ACHN (cell line): ENCODE measurements at regions of chr1 and their contacts with region 1.

Region 1: GRCh38 chr1:115469703-115470476 is 131.8 kb upstream of the NGF start:
- DNase-seq: peak; percentile 85

Region 2: DNA sequence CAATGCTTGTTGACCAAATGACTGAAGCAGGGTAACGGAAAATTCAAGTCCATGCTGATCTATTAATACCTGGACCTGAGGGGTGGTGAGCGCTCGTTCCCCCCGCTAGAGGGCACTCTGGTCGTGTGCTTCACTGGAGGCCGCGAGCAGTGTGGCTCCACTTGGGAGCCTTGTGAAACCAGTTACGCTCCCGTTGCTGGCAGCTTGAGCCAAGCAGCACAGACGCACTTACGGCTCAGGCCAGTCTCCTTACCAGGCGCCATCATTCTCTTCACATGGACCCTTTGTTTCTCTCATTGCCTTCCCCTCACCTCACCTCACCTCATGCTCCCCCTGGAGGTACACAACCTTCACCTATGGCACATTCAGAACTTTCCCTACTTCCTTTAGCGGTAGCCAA is 330.9 kb before region 1 on chr1:
- in situ Hi-C with region 1: loop called (anchors 25 kb)
- DNase-seq: peak; percentile 89

Region 3: DNA sequence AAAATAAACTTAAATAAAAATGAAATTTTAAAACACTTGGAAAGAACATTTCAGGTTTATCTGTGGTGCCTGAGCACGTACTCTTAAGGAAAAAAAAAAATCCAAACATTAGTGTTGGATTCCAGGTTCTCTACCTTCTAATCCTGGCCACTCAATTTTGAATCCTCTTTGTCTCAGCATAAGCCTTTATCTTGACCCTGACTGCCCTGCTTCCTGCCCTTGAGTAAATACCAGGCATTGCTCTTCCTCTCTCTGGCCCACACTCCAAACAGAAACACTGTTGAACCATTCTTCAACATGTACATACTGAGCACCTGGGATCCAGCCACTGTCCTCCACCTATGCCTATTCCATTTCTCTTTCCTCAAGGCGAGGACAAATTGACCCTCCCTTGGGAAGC is 160.5 kb after region 1 on chr1:
- in situ Hi-C with region 1: no loop called
- DNase-seq: no peak